ENCODE measurements at regions of chr1 and their contacts with region 1.

Region 1: GRCh38 chr1:198157241-198157846 is 546 bp downstream of the NEK7 start:
- DNase-seq: peak; percentile 89
- ATAC-seq: peak; percentile 29
- H3K4me3 Mint-ChIP-seq: peak overlapping the region; percentile 94
- H3K27ac Mint-ChIP-seq: peak overlapping the region; percentile 99
- H3K4me1 Mint-ChIP-seq: peaks cover 34% of the 10 kb centered on the region
- H3K27me3 Mint-ChIP-seq: no peaks in the 10 kb centered on the region

Region 2: GRCh38 chr1:197252973-197253372 is 904.4 kb before region 1 on chr1:
- CTCF ChIA-PET with region 1: no interaction called
- POLR2A ChIA-PET with region 1: no interaction called
- intact Hi-C with region 1: no loop called
- DNase-seq: no peak
- ATAC-seq: no peak
- H3K4me3 Mint-ChIP-seq: no peak overlapping the region
- H3K27ac Mint-ChIP-seq: no peak overlapping the region
- H3K4me1 Mint-ChIP-seq: no peaks in the 10 kb centered on the region
- H3K27me3 Mint-ChIP-seq: no peaks in the 10 kb centered on the region

Region 3: DNA sequence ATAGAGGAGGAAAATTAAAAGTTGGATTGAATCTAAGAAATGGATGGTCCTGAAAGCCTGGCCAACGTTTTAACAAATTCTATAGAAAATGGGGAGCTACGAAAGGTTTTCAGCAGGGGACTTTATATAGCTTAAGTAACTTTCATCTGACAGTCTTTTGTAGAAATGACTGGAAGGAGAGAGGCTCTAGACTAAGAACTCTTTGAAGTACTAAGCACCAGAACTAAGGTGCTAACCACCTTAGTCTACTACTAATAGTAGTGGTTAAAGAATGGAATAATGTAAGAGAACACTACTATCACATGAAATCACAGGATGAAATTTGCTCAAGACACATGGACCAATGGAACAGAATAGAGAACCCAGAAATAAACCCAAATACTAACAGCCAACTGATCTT is 508.2 kb before region 1 on chr1:
- CTCF ChIA-PET with region 1: no interaction called
- POLR2A ChIA-PET with region 1: no interaction called
- intact Hi-C with region 1: no loop called
- DNase-seq: no peak
- ATAC-seq: peak; percentile 30
- H3K4me3 Mint-ChIP-seq: no peak overlapping the region
- H3K27ac Mint-ChIP-seq: no peak overlapping the region
- H3K4me1 Mint-ChIP-seq: peaks cover 6% of the 10 kb centered on the region
- H3K27me3 Mint-ChIP-seq: no peaks in the 10 kb centered on the region

Region 4: GRCh38 chr1:197775282-197776262 is 381.8 kb before region 1 on chr1 and contains the start of gene DENND1B:
- CTCF ChIA-PET with region 1: no interaction called
- POLR2A ChIA-PET with region 1: no interaction called
- intact Hi-C with region 1: loop called in 1 of 2 experiments (anchors 5 kb)
- DNase-seq: peak; percentile 88
- ATAC-seq: peak; percentile 78
- H3K4me3 Mint-ChIP-seq: peak within 1 kb of the TSS; percentile 90
- H3K27ac Mint-ChIP-seq: peak within 1 kb of the TSS; percentile 99
- H3K4me1 Mint-ChIP-seq: peaks cover 66% of the 10 kb centered on the region
- H3K27me3 Mint-ChIP-seq: no peaks in the 10 kb centered on the region
- total RNA-seq, gene DENND1B: 9.6 to 12.6 TPM

Region 5: DNA sequence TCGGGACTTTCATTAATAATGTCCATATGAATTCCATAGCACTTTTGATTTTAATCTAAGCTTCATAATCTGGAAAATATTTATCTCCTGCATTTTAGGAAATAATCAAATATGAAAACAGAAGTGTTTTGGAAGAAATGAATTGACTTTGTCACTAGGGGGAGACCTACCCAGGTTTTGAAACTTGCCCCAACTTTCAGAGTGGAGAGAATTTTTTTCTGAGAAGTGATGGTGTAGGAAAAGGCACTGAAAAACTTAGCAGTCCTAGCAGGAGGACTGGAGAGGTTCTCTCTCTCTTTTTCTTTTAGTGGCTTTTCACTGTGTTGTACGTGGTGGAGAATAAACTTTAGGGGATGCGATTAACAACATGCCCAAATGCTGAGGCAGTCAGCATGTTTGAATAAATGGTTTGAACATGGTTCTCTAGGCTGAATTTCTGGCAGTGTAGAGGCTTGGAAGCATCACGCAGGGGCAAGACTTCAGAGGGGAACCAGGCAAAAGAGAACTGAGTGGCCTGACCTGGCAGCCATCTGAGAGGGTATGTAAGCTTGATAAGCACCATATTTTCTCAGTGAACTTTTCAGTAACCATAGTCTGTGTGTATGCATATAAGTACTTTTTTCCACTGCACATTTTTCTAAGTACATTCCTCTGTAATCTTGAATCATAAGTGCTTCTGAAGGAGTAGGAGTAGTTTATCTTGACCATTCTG is 68.8 kb before region 1 on chr1:
- CTCF ChIA-PET with region 1: interaction called, 4 read pairs
- POLR2A ChIA-PET with region 1: interaction called, 4 read pairs
- intact Hi-C with region 1: loop called (anchors 1 to 2 kb)
- DNase-seq: peak; percentile 16
- ATAC-seq: peak; percentile 65
- H3K4me3 Mint-ChIP-seq: no peak overlapping the region
- H3K27ac Mint-ChIP-seq: no peak overlapping the region
- H3K4me1 Mint-ChIP-seq: peaks cover 8% of the 10 kb centered on the region
- H3K27me3 Mint-ChIP-seq: peaks cover 2% of the 10 kb centered on the region

Region 6: GRCh38 chr1:198175423-198176170 is 18.3 kb after region 1 on chr1:
- CTCF ChIA-PET with region 1: interaction called, 14 read pairs
- POLR2A ChIA-PET with region 1: interaction called, 3 read pairs
- intact Hi-C with region 1: loop called in 1 of 2 experiments (anchors 2 kb)
- DNase-seq: no peak
- ATAC-seq: peak; percentile 86
- H3K4me3 Mint-ChIP-seq: peak overlapping the region; percentile 52
- H3K27ac Mint-ChIP-seq: peak overlapping the region; percentile 82
- H3K4me1 Mint-ChIP-seq: peaks cover 94% of the 10 kb centered on the region
- H3K27me3 Mint-ChIP-seq: no peaks in the 10 kb centered on the region

Region 7: GRCh38 chr1:198253668-198254067 is 96.3 kb after region 1 on chr1:
- CTCF ChIA-PET with region 1: interaction called, 6 read pairs
- POLR2A ChIA-PET with region 1: interaction called, 3 read pairs
- intact Hi-C with region 1: loop called (anchors 2 kb)
- DNase-seq: peak; percentile 22
- ATAC-seq: peak; percentile 88
- H3K4me3 Mint-ChIP-seq: peak overlapping the region; percentile 16
- H3K27ac Mint-ChIP-seq: peak overlapping the region; percentile 79
- H3K4me1 Mint-ChIP-seq: peaks cover 50% of the 10 kb centered on the region
- H3K27me3 Mint-ChIP-seq: peaks cover 2% of the 10 kb centered on the region

Region 8: DNA sequence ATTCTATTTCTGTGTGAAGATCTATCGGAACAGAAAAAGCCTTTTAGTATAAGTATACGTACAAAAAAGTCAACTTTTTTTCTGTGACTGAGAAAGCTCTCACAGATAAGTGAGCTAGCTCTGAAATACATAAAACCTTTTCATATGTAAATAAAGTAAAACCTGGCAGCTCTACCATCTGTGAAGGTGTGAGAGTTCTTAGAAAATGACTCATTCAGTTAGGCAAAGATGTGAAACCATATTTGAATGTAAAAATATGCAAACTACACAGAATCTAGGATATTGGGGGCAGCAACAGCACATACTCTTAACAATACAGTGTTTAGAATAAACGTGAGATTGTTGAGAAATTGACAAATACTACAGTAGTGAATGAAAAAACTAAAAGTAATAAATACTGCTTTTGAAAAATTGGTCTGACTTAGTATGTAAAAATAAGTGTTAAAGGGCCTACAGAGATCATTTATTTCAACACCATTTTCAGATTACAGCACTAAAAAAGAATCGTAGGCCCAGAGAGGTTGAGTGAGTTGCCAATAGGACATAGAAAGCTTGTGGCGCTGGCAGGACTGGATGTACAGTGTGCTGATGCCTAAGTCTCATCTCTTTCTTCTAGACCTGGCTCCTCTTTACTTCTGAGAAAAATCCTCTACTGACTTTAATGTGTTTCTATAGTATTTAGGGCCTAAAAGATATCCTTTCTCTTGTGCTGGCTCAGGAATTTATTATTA is 363.3 kb after region 1 on chr1:
- CTCF ChIA-PET with region 1: no interaction called
- POLR2A ChIA-PET with region 1: no interaction called
- intact Hi-C with region 1: loop called in 1 of 2 experiments (anchors 2 kb)
- DNase-seq: peak; percentile 23
- ATAC-seq: peak; percentile 60
- H3K4me3 Mint-ChIP-seq: peak overlapping the region; percentile 64
- H3K27ac Mint-ChIP-seq: peak overlapping the region; percentile 90
- H3K4me1 Mint-ChIP-seq: peaks cover 76% of the 10 kb centered on the region
- H3K27me3 Mint-ChIP-seq: no peaks in the 10 kb centered on the region

Region 9: GRCh38 chr1:198681831-198682759 is 524.8 kb after region 1 on chr1:
- CTCF ChIA-PET with region 1: interaction called, 3 read pairs
- POLR2A ChIA-PET with region 1: no interaction called
- intact Hi-C with region 1: loop called (anchors 5 kb)
- DNase-seq: peak; percentile 89
- ATAC-seq: peak; percentile 76
- H3K4me3 Mint-ChIP-seq: peak overlapping the region; percentile 61
- H3K27ac Mint-ChIP-seq: peak overlapping the region; percentile 96
- H3K4me1 Mint-ChIP-seq: peaks cover 85% of the 10 kb centered on the region
- H3K27me3 Mint-ChIP-seq: no peaks in the 10 kb centered on the region